ENCODE measurements at regions of chr5 and their contacts with region 1.

Region 1: GRCh38 chr5:150161242-150162141 is 5.1 kb upstream of the CDX1 start:
- DNase-seq: peak; percentile 88 to 94
- H3K4me3 ChIP-seq: no peak overlapping the region
- H3K27ac ChIP-seq: peak overlapping the region; percentile 89 to 98
- H3K4me1 ChIP-seq: peaks cover 0 to 77% (median 66%) of the 10 kb centered on the region in 4 donors
- H3K27me3 ChIP-seq: peaks cover 0 to 2% of the 10 kb centered on the region in 2 donors
- CTCF ChIP-seq: peak; percentile 93

Region 2: DNA sequence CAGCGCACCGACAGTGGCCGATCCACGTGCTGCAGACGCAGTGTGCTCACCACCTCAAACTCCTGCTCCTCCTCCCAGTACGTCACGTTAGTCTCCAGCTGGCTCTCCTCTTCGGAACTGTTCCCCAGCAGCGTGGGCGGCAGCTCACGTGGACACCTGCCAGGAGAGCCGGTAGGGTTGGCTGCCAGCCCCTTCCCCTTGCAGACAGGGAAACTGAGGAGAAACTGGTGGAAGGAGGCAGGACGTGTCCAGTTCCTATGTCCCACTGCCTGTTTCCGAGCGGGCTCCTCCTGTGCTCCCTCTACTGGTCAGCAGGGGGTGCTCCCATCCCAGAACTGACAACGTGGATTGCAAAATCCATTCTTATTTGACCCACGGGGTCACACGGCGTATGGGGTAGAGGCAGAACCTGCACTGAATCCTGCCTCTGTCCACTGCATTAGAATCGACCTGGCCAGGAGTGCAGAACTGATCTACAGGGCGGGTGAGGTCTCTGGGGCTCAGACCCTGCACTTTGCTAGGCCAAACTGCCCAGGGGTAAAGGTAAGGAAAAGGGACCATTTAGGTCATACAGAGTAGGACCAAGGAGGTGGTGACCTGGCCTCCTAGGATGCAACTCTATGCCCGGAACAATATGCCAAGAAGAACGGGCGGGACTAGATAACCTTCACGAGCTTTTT is 31.5 kb before region 1 on chr5:
- intact Hi-C with region 1: loop called (anchors 5 kb)
- DNase-seq: peak; percentile 82 to 90
- H3K4me3 ChIP-seq: no peak overlapping the region
- H3K27ac ChIP-seq: peak overlapping the region; percentile 89 to 98
- H3K4me1 ChIP-seq: peaks cover 0 to 57% (median 53%) of the 10 kb centered on the region in 4 donors
- H3K27me3 ChIP-seq: no peaks in the 10 kb centered on the region
- CTCF ChIP-seq: peak; percentile 94 to 97

Region 3: GRCh38 chr5:150209020-150209635 is 47.6 kb after region 1 on chr5:
- intact Hi-C with region 1: loop called (anchors 2 kb)
- DNase-seq: peak; percentile 75 to 94
- H3K4me3 ChIP-seq: peak overlapping the region; percentile 21 to 34
- H3K27ac ChIP-seq: peak overlapping the region; percentile 77 to 82
- H3K4me1 ChIP-seq: peaks cover 0 to 43% (median 21%) of the 10 kb centered on the region in 4 donors
- H3K27me3 ChIP-seq: no peaks in the 10 kb centered on the region
- CTCF ChIP-seq: peak in 1 of 2 experiments; percentile 3

Measured in tibial artery (tissue), 4 donors.